A549 (cell line): ENCODE measurements at regions of chr19 and their contacts with region 1.

Region 1: DNA sequence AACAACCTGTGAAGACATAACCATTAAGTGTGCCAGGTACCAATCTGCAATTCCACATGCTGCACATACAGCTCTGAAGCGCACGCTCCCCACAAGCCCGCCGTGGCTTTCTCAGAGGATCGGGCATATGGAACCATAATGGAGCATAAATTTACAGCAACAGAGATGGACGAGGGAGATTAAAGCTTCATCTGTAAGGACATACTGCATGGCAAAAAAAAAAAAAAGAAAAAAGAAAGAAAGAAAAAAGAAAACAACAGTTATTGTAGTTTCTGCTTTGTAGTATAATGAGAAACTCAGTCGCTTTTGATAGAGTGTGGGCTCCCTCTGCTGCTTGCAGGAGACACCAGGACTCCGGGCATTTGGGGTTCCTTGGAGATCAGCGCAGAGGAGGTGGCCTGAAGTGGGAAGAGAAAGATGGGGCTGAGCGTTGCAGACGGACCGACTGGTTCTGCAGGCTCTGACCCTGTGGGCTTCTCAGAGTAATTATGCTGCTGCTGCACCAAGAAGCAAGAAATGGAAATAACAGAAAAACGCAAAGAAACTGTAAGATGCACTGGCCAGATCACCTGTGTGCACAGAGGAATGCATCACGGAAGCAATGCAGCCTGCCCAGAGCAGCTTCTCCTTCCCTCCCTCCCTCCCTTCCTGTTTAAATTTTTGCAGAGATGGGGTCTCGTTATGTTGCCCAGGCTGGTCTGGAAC is 10.8 kb upstream of the PDCD5 start:
- DNase-seq: peak; percentile 70 to 85
- ATAC-seq: peak; percentile 98
- H3K4me3 ChIP-seq: no peak overlapping the region
- H3K27ac ChIP-seq: no peak overlapping the region
- H3K4me1 ChIP-seq: peaks cover 4% of the 10 kb centered on the region; the same call in 2 of the 3 replicates
- CTCF ChIP-seq: peak; percentile 99
- EP300 ChIP-seq: no peak
- POLR2A ChIP-seq: no peak
- RAD21 ChIP-seq: peak; percentile 99 to 100

Region 2: GRCh38 chr19:30682999-30683536 is 1887.2 kb before region 1 on chr19:
- CTCF ChIA-PET with region 1: interaction called, 26 read pairs
- POLR2A ChIA-PET with region 1: no interaction called
- DNase-seq: peak; percentile 74 to 95
- ATAC-seq: peak; percentile 62 to 89
- H3K4me3 ChIP-seq: no peak overlapping the region
- H3K27ac ChIP-seq: no peak overlapping the region
- H3K4me1 ChIP-seq: peaks cover 3% of the 10 kb centered on the region; the same call in 1 of the 3 replicates
- CTCF ChIP-seq: peak; percentile 98
- EP300 ChIP-seq: no peak
- POLR2A ChIP-seq: no peak
- RAD21 ChIP-seq: peak; percentile 98

Region 3: GRCh38 chr19:32318880-32319520 is 251.2 kb before region 1 on chr19:
- CTCF ChIA-PET with region 1: interaction called, 13 read pairs
- POLR2A ChIA-PET with region 1: no interaction called
- DNase-seq: peak; percentile 68 to 75
- ATAC-seq: peak; percentile 83 to 86; a peak in 5 of 6 replicates
- H3K4me3 ChIP-seq: no peak overlapping the region
- H3K27ac ChIP-seq: no peak overlapping the region
- H3K4me1 ChIP-seq: 0 out of 3 replicates have a peak, but pooled peaks cover 3% of the 10 kb centered on the region
- CTCF ChIP-seq: peak; percentile 37; the same call in 2 of the 3 replicates
- EP300 ChIP-seq: no peak
- POLR2A ChIP-seq: no peak
- RAD21 ChIP-seq: peak; percentile 22 to 42; a peak in 3 of 5 replicates

Region 4: DNA sequence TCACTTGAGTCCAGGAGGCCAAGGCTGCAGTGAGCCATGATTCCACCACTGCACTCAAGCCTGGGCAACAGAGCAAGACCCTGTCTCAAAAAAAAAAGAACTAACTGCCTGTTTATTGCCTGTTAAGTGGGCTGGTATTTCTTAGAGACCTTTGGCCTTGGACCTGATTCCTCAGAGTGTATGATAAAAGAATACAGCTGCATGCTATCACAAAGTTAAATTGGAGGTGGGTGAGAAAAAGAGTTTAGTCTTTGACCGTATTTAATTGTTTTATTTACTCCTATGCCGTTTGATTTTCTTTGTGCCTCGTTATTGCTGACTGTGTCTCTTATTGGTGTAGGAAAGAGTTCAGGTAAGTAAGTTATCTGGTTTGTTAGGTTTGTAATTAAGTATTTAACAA is 190.0 kb before region 1 on chr19:
- CTCF ChIA-PET with region 1: interaction called, 10 read pairs
- POLR2A ChIA-PET with region 1: no interaction called
- DNase-seq: no peak
- ATAC-seq: no peak
- H3K4me3 ChIP-seq: no peak overlapping the region
- H3K27ac ChIP-seq: no peak overlapping the region
- H3K4me1 ChIP-seq: peaks cover 17% of the 10 kb centered on the region
- CTCF ChIP-seq: no peak
- EP300 ChIP-seq: no peak
- POLR2A ChIP-seq: no peak
- RAD21 ChIP-seq: no peak

Region 5: GRCh38 chr19:32543107-32543900 is 26.9 kb before region 1 on chr19:
- CTCF ChIA-PET with region 1: interaction called, 21 read pairs
- POLR2A ChIA-PET with region 1: no interaction called
- DNase-seq: peak in 1 of 2 experiments; percentile 29
- ATAC-seq: peak in 1 of 2 experiments; percentile 42; a peak in 2 of 6 replicates
- H3K4me3 ChIP-seq: no peak overlapping the region
- H3K27ac ChIP-seq: no peak overlapping the region
- H3K4me1 ChIP-seq: 0 out of 3 replicates have a peak, but pooled peaks cover 4% of the 10 kb centered on the region
- CTCF ChIP-seq: no peak
- EP300 ChIP-seq: no peak
- POLR2A ChIP-seq: no peak
- RAD21 ChIP-seq: no peak

Region 6: GRCh38 chr19:32580901-32581703 is 10.9 kb after region 1 on chr19 and contains the start of gene PDCD5:
- CTCF ChIA-PET with region 1: interaction called, 40 read pairs
- POLR2A ChIA-PET with region 1: interaction called, 7 read pairs
- DNase-seq: peak; percentile 98
- ATAC-seq: peak; percentile 86 to 94
- H3K4me3 ChIP-seq: peak within 1 kb of the TSS; percentile 94
- H3K27ac ChIP-seq: peak within 1 kb of the TSS; percentile 91 to 93
- H3K4me1 ChIP-seq: peaks cover 16% of the 10 kb centered on the region
- CTCF ChIP-seq: no peak
- EP300 ChIP-seq: no peak
- POLR2A ChIP-seq: peak; percentile 98
- RAD21 ChIP-seq: no peak
- polyA plus RNA-seq, gene PDCD5: 196 and 445 TPM in 2 replicates